GM23248 (cell line): ENCODE measurements at regions of chr11 and their contacts with region 1.

Region 1: DNA sequence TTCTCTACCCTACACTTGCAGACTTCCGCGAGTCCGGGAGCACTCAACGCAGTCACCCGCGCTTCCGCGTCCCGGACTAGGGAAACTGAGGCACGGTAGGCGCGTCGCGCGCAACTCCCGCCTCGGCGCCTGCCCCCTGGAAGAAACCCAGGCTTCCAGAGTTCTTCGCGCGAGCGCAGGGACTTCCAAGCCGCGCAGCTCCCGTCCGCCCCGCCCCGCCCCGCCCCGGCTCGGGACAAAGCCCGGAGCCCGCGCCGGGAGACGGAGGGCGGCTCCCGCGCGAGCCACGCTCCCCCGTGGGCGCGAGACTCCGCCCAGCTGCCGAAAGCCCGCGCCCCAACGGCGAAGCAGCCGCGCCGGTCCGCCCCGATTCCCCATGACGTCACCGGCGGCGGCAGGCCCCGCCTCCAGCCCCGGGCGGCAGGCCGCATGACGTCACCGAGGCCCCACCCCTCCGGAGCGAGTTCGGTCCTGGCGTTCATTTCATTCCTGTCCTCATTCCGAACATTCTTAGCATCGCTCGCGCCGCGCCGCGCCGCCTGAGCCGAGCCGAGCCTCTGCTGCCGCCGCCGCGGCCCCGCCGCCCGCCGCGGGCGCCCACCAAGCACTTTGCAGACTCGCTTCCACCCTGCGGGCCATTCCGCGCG is at the start of gene TEAD1:
- DNase-seq: peak; percentile 98
- H3K4me3 ChIP-seq: peak within 1 kb of the TSS; percentile 91
- H3K27ac ChIP-seq: peak within 1 kb of the TSS; percentile 88
- H3K4me1 ChIP-seq: peaks cover 22% of the 10 kb centered on the region
- H3K27me3 ChIP-seq: no peaks in the 10 kb centered on the region
- total RNA-seq, gene TEAD1: 144 and 159 TPM in 2 replicates

Region 2: DNA sequence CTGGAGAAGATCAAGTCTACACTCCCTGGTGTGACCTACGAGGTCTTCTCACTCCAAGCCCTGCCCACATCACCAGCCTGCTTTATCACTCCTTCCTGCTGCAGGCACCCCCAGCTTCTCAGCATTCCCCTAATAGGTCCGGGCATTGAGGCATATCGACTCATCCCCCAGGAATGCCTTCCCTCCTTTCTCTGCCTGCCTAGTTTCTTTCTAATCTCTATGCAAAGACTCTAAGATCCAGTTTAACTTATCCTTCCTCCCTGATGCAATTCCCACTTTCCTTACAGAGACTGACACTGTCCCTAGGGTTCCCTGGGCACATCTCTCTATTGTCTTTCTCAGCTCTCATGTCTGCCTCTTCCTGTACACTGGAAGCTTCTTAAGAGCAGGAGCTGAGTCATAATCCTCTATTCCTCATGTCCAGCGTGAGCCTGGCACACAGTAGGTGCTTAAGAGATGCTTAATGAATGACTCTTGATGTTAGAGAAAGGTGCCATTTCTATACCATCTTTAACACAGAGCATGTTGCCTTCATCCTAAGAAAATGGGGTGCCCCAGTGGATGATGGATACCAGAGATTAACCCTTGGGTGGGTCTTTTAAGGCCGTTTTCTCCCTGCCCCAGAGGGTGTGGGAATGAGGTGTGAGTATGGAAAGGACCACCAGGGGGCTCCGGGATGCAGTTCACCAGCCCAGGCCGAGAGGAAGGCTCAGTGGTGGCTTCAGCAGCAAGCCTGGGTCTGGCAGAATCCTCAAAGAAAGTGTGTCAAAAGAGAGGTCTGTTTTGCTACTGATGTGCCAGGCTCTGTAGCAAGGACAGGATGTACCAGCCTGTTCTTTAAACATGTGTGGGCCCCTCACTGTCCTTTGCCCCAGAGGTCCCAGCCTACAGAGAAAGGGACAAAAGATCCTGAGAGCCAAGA is 262.0 kb before region 1 on chr11:
- in situ Hi-C with region 1: loop called (anchors 10 kb)
- DNase-seq: peak; percentile 94
- H3K4me3 ChIP-seq: peak overlapping the region; percentile 14; the same call in 1 of the 2 replicates
- H3K27ac ChIP-seq: peak overlapping the region; percentile 91
- H3K4me1 ChIP-seq: peaks cover 61% of the 10 kb centered on the region
- H3K27me3 ChIP-seq: no peaks in the 10 kb centered on the region

Region 3: GRCh38 chr11:12893787-12894672 is 220.0 kb after region 1 on chr11:
- in situ Hi-C with region 1: loop called (anchors 10 kb)
- DNase-seq: peak; percentile 67
- H3K4me3 ChIP-seq: no peak overlapping the region
- H3K27ac ChIP-seq: no peak overlapping the region
- H3K4me1 ChIP-seq: peaks cover 37% of the 10 kb centered on the region
- H3K27me3 ChIP-seq: no peaks in the 10 kb centered on the region